Heart right ventricle (tissue), 16 donors: ENCODE measurements at regions of chr20 and their contacts with region 1.

Region 1: GRCh38 chr20:56392282-56393137 is at the start of gene CSTF1:
- DNase-seq: peak; percentile 99 to 100
- ATAC-seq: peak; percentile 97 to 100 (median 98)
- H3K4me3 ChIP-seq: peak within 1 kb of the TSS; percentile 57 to 94 (median 80)
- H3K27ac ChIP-seq: peak within 1 kb of the TSS; percentile 1 to 93 (median 84)
- H3K4me1 ChIP-seq: peaks cover 2 to 31% (median 23%) of the 10 kb centered on the region in 9 donors
- H3K27me3 ChIP-seq: no peaks in the 10 kb centered on the region
- CTCF ChIP-seq: no peak
- total RNA-seq, gene CSTF1: 16.3 to 23.7 (median 21.6) TPM

Region 2: DNA sequence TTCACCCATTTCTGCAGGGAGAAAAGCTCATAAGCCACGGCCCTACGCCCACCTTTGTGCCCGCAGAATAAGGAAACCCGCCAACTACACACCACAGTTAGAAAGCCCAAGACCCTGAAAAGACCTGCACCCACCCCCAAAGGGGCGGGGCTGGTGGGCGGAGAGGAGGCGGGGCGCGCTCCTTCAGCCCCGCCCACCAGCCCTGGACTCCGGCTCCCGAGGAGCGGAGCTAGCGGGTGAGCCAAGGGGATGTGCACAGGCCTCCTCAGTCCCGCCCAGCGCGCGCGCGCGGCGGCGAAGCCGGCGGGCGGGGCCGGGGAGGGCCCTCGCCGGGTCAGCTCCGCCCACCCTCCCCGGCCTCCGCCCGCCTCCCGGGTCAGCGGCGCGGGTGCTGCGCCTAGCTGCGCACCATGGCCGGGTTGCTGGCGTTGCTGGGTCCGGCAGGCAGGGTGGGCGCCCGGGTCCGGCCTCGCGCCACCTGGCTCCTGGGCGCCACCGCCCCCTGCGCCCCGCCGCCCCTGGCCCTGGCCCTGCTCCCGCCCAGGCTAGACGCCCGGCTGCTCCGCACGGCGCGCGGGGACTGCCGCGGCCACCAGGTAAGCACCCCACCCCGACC is 33.8 kb before region 1 on chr20 and contains the start of gene FAM210B:
- intact Hi-C with region 1: loop called in 4 of 10 experiments (anchors 1 to 5 kb)
- DNase-seq: peak; percentile 87 to 90
- ATAC-seq: peak; percentile 93 to 99 (median 96)
- H3K4me3 ChIP-seq: peak within 1 kb of the TSS; percentile 72 to 95 (median 90)
- H3K27ac ChIP-seq: peak within 1 kb of the TSS; percentile 72 to 97 (median 91)
- H3K4me1 ChIP-seq: peaks cover 7 to 46% (median 34%) of the 10 kb centered on the region in 9 donors
- H3K27me3 ChIP-seq: peaks cover 0 to under 1% (median 0%) of the 10 kb centered on the region in 7 donors
- CTCF ChIP-seq: no peak
- total RNA-seq, gene FAM210B: 48.8 to 85.2 (median 57.6) TPM

Region 3: GRCh38 chr20:57594092-57594911 is 1201.8 kb after region 1 on chr20:
- intact Hi-C with region 1: no loop called
- DNase-seq: peak; percentile 35 to 61
- ATAC-seq: peak in 4 of 8 donors; percentile 35 to 56 (median 46)
- H3K4me3 ChIP-seq: no peak overlapping the region
- H3K27ac ChIP-seq: no peak overlapping the region
- H3K4me1 ChIP-seq: peaks cover 0 to 14% (median 7%) of the 10 kb centered on the region in 9 donors
- H3K27me3 ChIP-seq: peaks cover 0 to 26% (median 4%) of the 10 kb centered on the region in 7 donors
- CTCF ChIP-seq: peak; percentile 76 to 97 (median 88)